ENCODE measurements at regions of chr11 and their contacts with region 1.

Region 1: DNA sequence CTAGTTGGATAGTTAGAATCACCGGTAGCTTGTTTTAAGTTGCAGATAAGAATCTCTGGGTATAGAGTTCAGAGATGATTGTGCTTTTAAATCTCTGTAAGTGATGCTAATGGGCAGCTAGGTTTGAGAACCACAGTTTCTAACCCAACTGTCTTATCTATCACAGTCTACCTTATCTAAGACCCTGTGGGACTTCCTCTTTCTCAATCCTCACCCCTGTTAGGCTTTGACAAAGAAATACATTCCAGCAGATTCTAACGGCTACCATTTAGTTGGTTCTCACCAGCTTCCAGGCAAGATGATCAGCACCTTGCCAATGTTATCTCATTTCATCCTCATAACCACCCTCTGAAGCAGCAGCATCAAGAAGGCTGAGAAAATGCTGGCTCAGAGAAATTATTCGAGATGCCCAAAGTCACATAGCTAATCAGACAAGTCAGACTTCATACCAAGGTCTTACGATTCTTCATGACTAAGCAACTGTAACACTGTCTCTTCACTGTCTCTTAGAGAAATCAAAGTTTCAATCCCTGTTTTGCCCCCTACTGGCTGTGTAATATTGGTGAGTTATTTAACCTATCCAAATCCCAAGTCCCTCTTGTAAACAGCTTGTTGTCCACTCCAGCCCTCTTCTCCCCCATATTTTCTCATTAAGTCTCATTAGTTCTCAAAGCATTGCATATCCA is 192.4 kb upstream of the API5 start:
- DNase-seq: no peak
- H3K4me3 ChIP-seq: no peak overlapping the region
- H3K27ac ChIP-seq: no peak overlapping the region
- H3K4me1 ChIP-seq: no peaks in the 10 kb centered on the region
- H3K27me3 ChIP-seq: no peaks in the 10 kb centered on the region
- CTCF ChIP-seq: peak in 1 of 3 experiments; percentile 22; a peak in 1 of 4 replicates
- EP300 ChIP-seq: no peak
- POLR2A ChIP-seq: no peak
- RAD21 ChIP-seq: no peak

Region 2: DNA sequence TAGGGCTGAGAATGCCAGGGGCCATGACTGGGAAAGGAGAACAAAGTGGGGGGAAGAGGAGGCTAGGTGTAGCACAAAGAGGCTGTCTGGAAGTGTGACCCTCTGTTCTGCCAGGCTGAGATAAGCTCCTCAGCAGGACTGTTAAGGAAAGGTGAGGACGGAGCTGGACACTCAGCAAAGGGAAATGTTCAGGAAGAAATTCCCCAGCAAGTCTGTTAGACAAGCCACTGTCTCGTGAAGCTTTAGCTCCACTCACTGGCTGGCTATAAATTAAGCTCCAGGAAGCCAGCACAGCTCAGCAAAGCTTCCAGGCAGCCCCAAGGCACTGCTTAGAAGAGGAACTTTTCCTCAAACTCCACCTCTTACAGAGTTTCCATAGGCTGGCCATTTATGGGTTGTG is 11.2 kb after region 1 on chr11:
- CTCF ChIA-PET with region 1: interaction called, 12 read pairs
- POLR2A ChIA-PET with region 1: no interaction called
- DNase-seq: no peak
- H3K4me3 ChIP-seq: no peak overlapping the region
- H3K27ac ChIP-seq: no peak overlapping the region
- H3K4me1 ChIP-seq: no peaks in the 10 kb centered on the region
- H3K27me3 ChIP-seq: no peaks in the 10 kb centered on the region
- CTCF ChIP-seq: peak in 2 of 3 experiments; percentile 42 to 45; a peak in 3 of 4 replicates
- EP300 ChIP-seq: no peak
- POLR2A ChIP-seq: no peak
- RAD21 ChIP-seq: peak; percentile 65 to 76

Measured in H1 (cell line).